PC-9 (cell line): ENCODE measurements at regions of chr15 and their contacts with region 1.

Region 1: DNA sequence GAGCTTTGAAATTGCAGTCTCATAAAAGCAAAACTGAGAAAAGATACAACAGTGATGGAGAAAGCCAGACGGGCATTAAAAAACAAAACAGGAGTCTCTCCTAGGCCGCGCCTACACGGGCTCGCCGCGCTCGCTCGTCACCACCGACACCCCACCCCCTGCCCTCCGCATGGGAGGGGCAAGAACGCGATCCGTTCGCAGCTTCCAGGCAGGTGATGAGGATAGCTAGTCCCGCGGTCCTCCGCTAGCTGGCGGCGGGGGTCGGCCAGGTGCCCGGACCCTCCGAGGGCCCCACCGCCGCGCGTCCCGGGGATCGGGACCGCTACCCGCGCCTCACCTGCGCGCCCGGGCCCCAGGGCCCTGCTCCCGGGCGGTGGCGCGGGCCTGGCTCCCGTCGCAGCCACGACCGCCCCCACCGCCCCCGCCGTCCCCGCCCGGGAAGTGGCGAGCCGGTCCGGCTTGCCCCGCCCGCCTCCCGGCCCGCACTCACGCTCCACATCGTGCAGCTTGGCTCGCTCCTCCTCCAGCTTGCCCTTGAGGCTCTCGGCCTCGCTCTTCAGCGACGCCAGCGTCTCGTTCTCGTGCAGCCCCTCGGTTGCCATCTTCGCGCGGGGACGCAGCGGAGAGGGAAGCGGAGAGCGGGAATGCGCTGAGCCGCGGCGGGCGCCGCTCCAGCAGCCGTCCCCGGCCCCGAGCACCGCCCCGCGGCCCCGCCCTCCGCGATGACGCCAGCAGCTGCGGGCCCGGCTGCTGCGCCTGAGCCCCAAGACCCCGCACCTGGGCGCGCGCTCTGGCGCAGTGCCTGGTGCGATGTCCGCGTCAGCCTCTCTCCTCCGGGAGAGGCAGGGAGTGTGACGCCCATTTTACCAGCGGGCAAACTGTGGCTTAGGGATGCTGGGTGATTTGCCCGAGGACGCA is 11.7 kb downstream of the GNB5 start:
- DNase-seq: peak; percentile 54 to 86
- H3K4me3 ChIP-seq: peak overlapping the region; percentile 60
- H3K27ac ChIP-seq: no peak overlapping the region
- H3K4me1 ChIP-seq: peaks cover 11% of the 10 kb centered on the region
- H3K27me3 ChIP-seq: no peaks in the 10 kb centered on the region
- CTCF ChIP-seq: no peak

Region 2: GRCh38 chr15:51749307-51749706 is 430.2 kb before region 1 on chr15:
- CTCF ChIA-PET with region 1: no interaction called
- POLR2A ChIA-PET with region 1: no interaction called
- intact Hi-C with region 1: no loop called
- DNase-seq: no peak
- H3K4me3 ChIP-seq: no peak overlapping the region
- H3K27ac ChIP-seq: no peak overlapping the region
- H3K4me1 ChIP-seq: no peaks in the 10 kb centered on the region
- H3K27me3 ChIP-seq: peaks cover 8% of the 10 kb centered on the region; the same call in 1 of the 2 replicates
- CTCF ChIP-seq: no peak

Region 3: DNA sequence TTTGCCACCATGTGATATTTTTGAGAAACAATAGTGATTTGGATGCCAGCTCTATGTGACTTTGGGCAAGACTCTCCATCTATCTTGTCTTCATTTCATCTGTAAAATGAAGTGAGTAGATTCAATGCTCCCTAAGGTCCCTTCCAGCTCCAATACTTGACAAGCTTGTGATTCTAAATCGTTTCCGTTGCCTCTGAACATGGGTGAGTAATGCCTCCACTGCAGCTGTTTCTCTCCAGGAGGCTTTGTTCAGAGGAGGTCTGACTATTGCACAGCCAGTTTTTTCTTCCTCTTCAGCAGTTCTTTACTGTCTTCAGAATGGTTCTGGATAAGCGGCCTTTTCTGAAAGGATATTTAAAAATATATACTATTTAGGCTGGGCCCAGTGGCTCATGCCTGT is 364.9 kb before region 1 on chr15:
- CTCF ChIA-PET with region 1: no interaction called
- POLR2A ChIA-PET with region 1: interaction called, 20 read pairs
- intact Hi-C with region 1: no loop called
- DNase-seq: no peak
- H3K4me3 ChIP-seq: no peak overlapping the region
- H3K27ac ChIP-seq: no peak overlapping the region
- H3K4me1 ChIP-seq: peaks cover 16% of the 10 kb centered on the region
- H3K27me3 ChIP-seq: no peaks in the 10 kb centered on the region
- CTCF ChIP-seq: no peak

Region 4: GRCh38 chr15:51935466-51936104 is 244.0 kb before region 1 on chr15:
- CTCF ChIA-PET with region 1: no interaction called
- POLR2A ChIA-PET with region 1: interaction called, 11 read pairs
- intact Hi-C with region 1: no loop called
- DNase-seq: no peak
- H3K4me3 ChIP-seq: no peak overlapping the region
- H3K27ac ChIP-seq: no peak overlapping the region
- H3K4me1 ChIP-seq: no peaks in the 10 kb centered on the region
- H3K27me3 ChIP-seq: no peaks in the 10 kb centered on the region
- CTCF ChIP-seq: no peak

Region 5: GRCh38 chr15:52735231-52736089 is 555.9 kb after region 1 on chr15:
- CTCF ChIA-PET with region 1: no interaction called
- POLR2A ChIA-PET with region 1: no interaction called
- intact Hi-C with region 1: loop called (anchors 5 kb)
- DNase-seq: peak; percentile 68 to 69
- H3K4me3 ChIP-seq: no peak overlapping the region
- H3K27ac ChIP-seq: no peak overlapping the region
- H3K4me1 ChIP-seq: peaks cover 13% of the 10 kb centered on the region
- H3K27me3 ChIP-seq: no peaks in the 10 kb centered on the region
- CTCF ChIP-seq: peak; percentile 84

Region 6: GRCh38 chr15:52994290-52994689 is 814.8 kb after region 1 on chr15:
- CTCF ChIA-PET with region 1: no interaction called
- POLR2A ChIA-PET with region 1: no interaction called
- intact Hi-C with region 1: no loop called
- DNase-seq: no peak
- H3K4me3 ChIP-seq: no peak overlapping the region
- H3K27ac ChIP-seq: no peak overlapping the region
- H3K4me1 ChIP-seq: no peaks in the 10 kb centered on the region
- H3K27me3 ChIP-seq: no peaks in the 10 kb centered on the region
- CTCF ChIP-seq: no peak

Region 7: GRCh38 chr15:53080484-53080883 is 900.9 kb after region 1 on chr15:
- CTCF ChIA-PET with region 1: no interaction called
- POLR2A ChIA-PET with region 1: interaction called, 11 read pairs
- intact Hi-C with region 1: no loop called
- DNase-seq: no peak
- H3K4me3 ChIP-seq: no peak overlapping the region
- H3K27ac ChIP-seq: no peak overlapping the region
- H3K4me1 ChIP-seq: no peaks in the 10 kb centered on the region
- H3K27me3 ChIP-seq: no peaks in the 10 kb centered on the region
- CTCF ChIP-seq: no peak